ENCODE measurements at regions of chr1 and their contacts with region 1.

Region 1: GRCh38 chr1:108067884-108068538 is 103.0 kb upstream of the VAV3 start:
- DNase-seq: no peak
- H3K4me3 ChIP-seq: no peak overlapping the region
- H3K4me3 Mint-ChIP-seq: no peak overlapping the region
- H3K27ac Mint-ChIP-seq: no peak overlapping the region
- H3K4me1 ChIP-seq: peaks cover 26% of the 10 kb centered on the region
- H3K4me1 Mint-ChIP-seq: peaks cover 16% of the 10 kb centered on the region
- H3K27me3 ChIP-seq: no peaks in the 10 kb centered on the region
- H3K27me3 Mint-ChIP-seq: no peaks in the 10 kb centered on the region
- CTCF ChIP-seq: no peak

Region 2: GRCh38 chr1:108028841-108029388 is 39.1 kb before region 1 on chr1:
- CTCF ChIA-PET with region 1: no interaction called
- POLR2A ChIA-PET with region 1: no interaction called
- intact Hi-C with region 1: loop called (anchors 1 kb)
- DNase-seq: no peak
- H3K4me3 ChIP-seq: no peak overlapping the region
- H3K4me3 Mint-ChIP-seq: no peak overlapping the region
- H3K27ac Mint-ChIP-seq: no peak overlapping the region
- H3K4me1 ChIP-seq: no peaks in the 10 kb centered on the region
- H3K4me1 Mint-ChIP-seq: no peaks in the 10 kb centered on the region
- H3K27me3 ChIP-seq: no peaks in the 10 kb centered on the region
- H3K27me3 Mint-ChIP-seq: peaks cover 3% of the 10 kb centered on the region
- CTCF ChIP-seq: no peak

Region 3: DNA sequence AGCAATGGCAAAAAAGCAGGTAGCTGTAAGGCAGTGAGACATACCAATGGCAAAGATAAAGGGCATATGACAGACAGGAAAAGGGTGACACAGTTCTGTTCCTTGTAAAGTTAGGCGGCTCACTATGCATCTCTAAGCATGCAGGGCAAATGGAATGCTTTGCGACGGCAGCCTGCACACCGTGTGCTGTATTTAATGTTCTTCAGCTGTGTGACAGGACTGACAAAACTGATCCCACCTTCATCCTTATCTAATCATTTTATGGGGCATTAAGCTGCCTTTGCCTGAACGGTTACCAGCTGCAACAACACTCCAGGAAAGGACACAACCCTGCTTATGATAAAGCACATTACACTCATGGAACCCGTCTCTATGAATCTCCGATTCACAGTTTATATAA is 22.6 kb before region 1 on chr1:
- CTCF ChIA-PET with region 1: no interaction called
- POLR2A ChIA-PET with region 1: no interaction called
- intact Hi-C with region 1: loop called (anchors 1 kb)
- DNase-seq: peak; percentile 15 to 44
- H3K4me3 ChIP-seq: no peak overlapping the region
- H3K4me3 Mint-ChIP-seq: no peak overlapping the region
- H3K27ac Mint-ChIP-seq: peak overlapping the region; percentile 56
- H3K4me1 ChIP-seq: peaks cover 10% of the 10 kb centered on the region
- H3K4me1 Mint-ChIP-seq: peaks cover 30% of the 10 kb centered on the region
- H3K27me3 ChIP-seq: no peaks in the 10 kb centered on the region
- H3K27me3 Mint-ChIP-seq: no peaks in the 10 kb centered on the region
- CTCF ChIP-seq: no peak